Natural killer cell (primary cell): ENCODE measurements at regions of chr2 and their contacts with region 1.

Region 1: GRCh38 chr2:72973566-72974435 is 56.5 kb downstream of the EMX1 start:
- DNase-seq: peak; percentile 27 to 61
- ATAC-seq: peak; percentile 73 to 94 (median 84)
- H3K4me3 ChIP-seq: no peak overlapping the region
- H3K4me3 Mint-ChIP-seq: no peak overlapping the region
- H3K27ac ChIP-seq: no peak overlapping the region
- H3K27ac Mint-ChIP-seq: no peak overlapping the region
- H3K4me1 ChIP-seq: no peaks in the 10 kb centered on the region
- H3K4me1 Mint-ChIP-seq: no peaks in the 10 kb centered on the region
- H3K27me3 ChIP-seq: no peaks in the 10 kb centered on the region
- H3K27me3 Mint-ChIP-seq: no peaks in the 10 kb centered on the region
- CTCF ChIP-seq: peak; percentile 63

Region 2: GRCh38 chr2:72892506-72893173 is 81.2 kb before region 1 on chr2:
- intact Hi-C with region 1: loop called (anchors 1 kb)
- DNase-seq: peak; percentile 42 to 76
- ATAC-seq: peak; percentile 67 to 95 (median 90)
- H3K4me3 ChIP-seq: no peak overlapping the region
- H3K4me3 Mint-ChIP-seq: no peak overlapping the region
- H3K27ac ChIP-seq: no peak overlapping the region
- H3K27ac Mint-ChIP-seq: no peak overlapping the region
- H3K4me1 ChIP-seq: peaks cover 9% of the 10 kb centered on the region
- H3K4me1 Mint-ChIP-seq: peaks cover 0 to 9% of the 10 kb centered on the region in 2 donors
- H3K27me3 ChIP-seq: peaks cover 3% of the 10 kb centered on the region
- H3K27me3 Mint-ChIP-seq: peaks cover 23 to 37% of the 10 kb centered on the region in 2 donors
- CTCF ChIP-seq: peak; percentile 63

Region 3: GRCh38 chr2:73085691-73086360 is 112.0 kb after region 1 on chr2:
- intact Hi-C with region 1: no loop called
- DNase-seq: peak; percentile 74 to 86
- ATAC-seq: peak; percentile 88 to 100 (median 97)
- H3K4me3 ChIP-seq: no peak overlapping the region
- H3K4me3 Mint-ChIP-seq: no peak overlapping the region
- H3K27ac ChIP-seq: no peak overlapping the region
- H3K27ac Mint-ChIP-seq: no peak overlapping the region
- H3K4me1 ChIP-seq: no peaks in the 10 kb centered on the region
- H3K4me1 Mint-ChIP-seq: peaks cover 0 to 6% of the 10 kb centered on the region in 2 donors
- H3K27me3 ChIP-seq: no peaks in the 10 kb centered on the region
- H3K27me3 Mint-ChIP-seq: peaks cover 0 to 2% of the 10 kb centered on the region in 2 donors
- CTCF ChIP-seq: peak; percentile 83